ENCODE measurements at regions of chr13 and their contacts with region 1.

Region 1: GRCh38 chr13:59391696-59392095 is 772.0 kb downstream of the DIAPH3 start:
- DNase-seq: peak in 1 of 10 donors; percentile 5
- H3K4me3 ChIP-seq: no peak overlapping the region
- H3K27ac ChIP-seq: no peak overlapping the region
- H3K27me3 ChIP-seq: no peaks in the 10 kb centered on the region
- CTCF ChIP-seq: peak; percentile 45 to 82 (median 68)

Region 2: GRCh38 chr13:59477011-59477410 is 85.3 kb after region 1 on chr13:
- intact Hi-C with region 1: no loop called
- DNase-seq: no peak
- H3K4me3 ChIP-seq: no peak overlapping the region
- H3K27ac ChIP-seq: no peak overlapping the region
- H3K27me3 ChIP-seq: peaks cover 0 to 7% (median 0%) of the 10 kb centered on the region in 45 donors
- CTCF ChIP-seq: peak in 10 of 56 donors; percentile 7 to 25 (median 18)

Region 3: GRCh38 chr13:59677966-59678814 is 286.5 kb after region 1 on chr13:
- intact Hi-C with region 1: loop called in 1 of 2 experiments (anchors 5 kb)
- DNase-seq: no peak
- H3K4me3 ChIP-seq: no peak overlapping the region
- H3K27ac ChIP-seq: no peak overlapping the region
- H3K27me3 ChIP-seq: no peaks in the 10 kb centered on the region
- CTCF ChIP-seq: peak; percentile 26 to 76 (median 62)

Region 4: DNA sequence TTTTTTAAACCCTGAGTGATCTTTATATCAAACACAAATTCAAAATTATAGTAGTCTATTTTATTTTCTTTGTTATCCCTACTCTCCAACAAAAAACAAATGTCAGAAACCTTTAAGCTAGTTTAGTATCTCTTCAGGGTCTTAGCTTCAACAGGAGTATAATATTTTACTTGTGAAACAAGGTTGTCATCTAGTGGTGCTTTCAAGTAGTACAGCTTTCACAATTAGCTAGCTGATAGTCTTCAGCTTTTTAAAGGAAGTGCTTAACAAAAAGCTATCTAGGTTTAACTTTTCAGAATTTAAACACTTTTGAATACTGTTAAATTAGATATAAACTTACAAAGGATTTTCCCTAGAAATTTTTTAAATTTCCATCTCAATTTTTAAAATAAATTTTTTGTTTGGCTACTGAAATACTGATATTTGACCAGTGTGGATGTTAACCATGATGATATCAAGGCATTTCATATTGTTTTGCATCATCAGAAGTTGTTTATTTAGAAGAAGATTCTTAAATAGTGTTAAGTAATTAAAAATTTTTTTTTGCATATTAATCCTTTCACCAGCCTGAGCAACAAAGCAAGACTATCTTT is 1039.5 kb after region 1 on chr13:
- intact Hi-C with region 1: loop called in 1 of 2 experiments (anchors 10 kb)
- DNase-seq: no peak
- H3K4me3 ChIP-seq: peak overlapping the region in 1 of 59 donors; percentile 1
- H3K27ac ChIP-seq: no peak overlapping the region
- H3K27me3 ChIP-seq: no peaks in the 10 kb centered on the region
- CTCF ChIP-seq: peak; percentile 54 to 97 (median 84)